ENCODE measurements at regions of chr4 and their contacts with region 1.

Region 1: DNA sequence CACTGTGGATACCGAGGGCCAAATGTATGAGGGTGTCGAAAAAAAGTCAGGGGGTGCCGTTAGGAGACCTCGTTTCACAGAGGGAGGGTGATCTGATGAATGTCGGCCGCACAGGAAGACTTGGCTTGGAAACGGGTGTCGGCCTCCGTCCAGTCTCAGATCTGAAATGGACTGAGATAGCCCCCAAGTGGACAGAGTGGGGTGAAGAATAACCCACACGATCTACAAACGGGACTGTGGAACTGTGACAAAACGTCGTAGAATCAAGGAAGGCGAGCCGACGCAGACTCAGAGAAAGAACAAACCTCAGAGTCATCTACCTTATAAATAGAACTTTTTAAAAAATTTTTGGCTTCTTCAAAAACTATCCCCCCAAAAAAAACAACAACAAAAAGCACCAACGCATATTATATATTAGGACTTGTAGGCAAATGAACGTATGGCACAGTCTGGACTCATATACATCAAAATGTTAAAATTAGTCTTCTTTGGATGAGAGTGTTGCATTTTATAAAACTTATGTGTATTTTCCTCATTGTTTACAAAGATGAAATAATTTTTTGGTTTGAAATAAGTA is 63.8 kb upstream of the IRF2 start:
- DNase-seq: peak in 8 of 9 donors; percentile 42 to 67 (median 56)
- ATAC-seq: peak; percentile 79
- H3K4me3 ChIP-seq: peak overlapping the region; percentile 86
- H3K4me3 Mint-ChIP-seq: peak overlapping the region; percentile 83 to 99 (median 95)
- H3K27ac ChIP-seq: peak overlapping the region; percentile 97
- H3K27ac Mint-ChIP-seq: peak overlapping the region; percentile 90 to 100 (median 99)
- H3K4me1 ChIP-seq: peaks cover 20 to 22% of the 10 kb centered on the region in 2 donors
- H3K4me1 Mint-ChIP-seq: peaks cover 34 to 51% (median 45%) of the 10 kb centered on the region in 7 donors
- H3K27me3 ChIP-seq: no peaks in the 10 kb centered on the region
- H3K27me3 Mint-ChIP-seq: no peaks in the 10 kb centered on the region

Region 2: GRCh38 chr4:182917182-182918043 is 1620.7 kb before region 1 on chr4 and contains the start of gene DCTD:
- CTCF ChIA-PET with region 1: no interaction called
- POLR2A ChIA-PET with region 1: no interaction called
- intact Hi-C with region 1: loop called in 1 of 2 experiments (anchors 5 kb)
- DNase-seq: peak; percentile 71 to 90 (median 80)
- ATAC-seq: peak; percentile 89
- H3K4me3 ChIP-seq: peak within 1 kb of the TSS; percentile 77
- H3K4me3 Mint-ChIP-seq: peak within 1 kb of the TSS; percentile 75 to 95 (median 90)
- H3K27ac ChIP-seq: peak within 1 kb of the TSS; percentile 89
- H3K27ac Mint-ChIP-seq: peak within 1 kb of the TSS; percentile 86 to 98 (median 92)
- H3K4me1 ChIP-seq: peaks cover 20 to 26% of the 10 kb centered on the region in 2 donors
- H3K4me1 Mint-ChIP-seq: peaks cover 17 to 58% (median 50%) of the 10 kb centered on the region in 7 donors
- H3K27me3 ChIP-seq: no peaks in the 10 kb centered on the region
- H3K27me3 Mint-ChIP-seq: peaks cover 0 to 6% (median 0%) of the 10 kb centered on the region in 5 donors
- total RNA-seq, gene DCTD: 61.4 to 76.2 (median 68.9) TPM

Region 3: DNA sequence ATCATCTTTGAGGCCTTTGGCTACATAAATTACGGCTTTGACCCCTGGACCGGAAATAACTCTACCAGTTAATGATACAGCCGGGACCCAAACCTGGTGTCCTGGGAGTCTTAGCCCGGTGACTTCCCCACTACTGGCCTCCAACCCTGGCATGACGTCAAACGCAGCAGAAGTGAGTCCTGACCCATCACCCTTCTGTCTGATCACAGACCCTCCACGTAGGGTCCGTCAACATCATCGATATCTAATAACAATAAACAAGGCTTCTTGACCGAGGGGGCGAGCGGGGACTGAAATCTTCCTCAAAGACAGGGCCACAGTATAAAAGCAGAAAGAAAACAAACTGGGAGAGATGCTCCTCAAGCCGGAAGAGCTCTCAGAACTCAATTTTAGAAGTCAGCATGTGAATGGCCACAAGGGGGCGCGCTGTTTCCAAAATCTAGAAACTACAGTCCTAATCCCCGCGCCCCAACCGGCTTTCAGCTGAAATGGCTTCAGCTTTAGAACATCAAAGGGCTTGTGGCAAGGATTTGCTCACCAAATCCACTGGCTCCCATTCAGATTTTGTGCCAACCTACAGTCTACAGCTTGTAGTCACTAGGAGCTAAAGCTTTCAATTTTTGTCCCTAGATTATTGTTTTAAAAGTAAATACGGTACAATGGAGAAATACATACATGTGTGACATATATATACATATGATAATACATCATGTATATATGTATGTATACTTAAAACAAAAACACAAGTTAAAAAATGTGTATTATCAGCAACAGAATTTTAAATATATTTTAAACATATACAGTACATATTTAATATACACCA is 274.0 kb before region 1 on chr4:
- CTCF ChIA-PET with region 1: interaction called, 10 read pairs
- POLR2A ChIA-PET with region 1: interaction called, 63 read pairs
- intact Hi-C with region 1: loop called (anchors 1 kb)
- DNase-seq: peak; percentile 80 to 90 (median 87)
- ATAC-seq: peak; percentile 86
- H3K4me3 ChIP-seq: no peak overlapping the region
- H3K4me3 Mint-ChIP-seq: peak overlapping the region in 1 of 10 donors; percentile 17
- H3K27ac ChIP-seq: no peak overlapping the region
- H3K27ac Mint-ChIP-seq: peak overlapping the region in 6 of 9 donors; percentile 5 to 72 (median 63)
- H3K4me1 ChIP-seq: peaks cover 6 to 14% of the 10 kb centered on the region in 2 donors
- H3K4me1 Mint-ChIP-seq: peaks cover 5 to 54% (median 28%) of the 10 kb centered on the region in 7 donors
- H3K27me3 ChIP-seq: no peaks in the 10 kb centered on the region
- H3K27me3 Mint-ChIP-seq: peaks cover 0 to 2% (median 0%) of the 10 kb centered on the region in 5 donors

Region 4: DNA sequence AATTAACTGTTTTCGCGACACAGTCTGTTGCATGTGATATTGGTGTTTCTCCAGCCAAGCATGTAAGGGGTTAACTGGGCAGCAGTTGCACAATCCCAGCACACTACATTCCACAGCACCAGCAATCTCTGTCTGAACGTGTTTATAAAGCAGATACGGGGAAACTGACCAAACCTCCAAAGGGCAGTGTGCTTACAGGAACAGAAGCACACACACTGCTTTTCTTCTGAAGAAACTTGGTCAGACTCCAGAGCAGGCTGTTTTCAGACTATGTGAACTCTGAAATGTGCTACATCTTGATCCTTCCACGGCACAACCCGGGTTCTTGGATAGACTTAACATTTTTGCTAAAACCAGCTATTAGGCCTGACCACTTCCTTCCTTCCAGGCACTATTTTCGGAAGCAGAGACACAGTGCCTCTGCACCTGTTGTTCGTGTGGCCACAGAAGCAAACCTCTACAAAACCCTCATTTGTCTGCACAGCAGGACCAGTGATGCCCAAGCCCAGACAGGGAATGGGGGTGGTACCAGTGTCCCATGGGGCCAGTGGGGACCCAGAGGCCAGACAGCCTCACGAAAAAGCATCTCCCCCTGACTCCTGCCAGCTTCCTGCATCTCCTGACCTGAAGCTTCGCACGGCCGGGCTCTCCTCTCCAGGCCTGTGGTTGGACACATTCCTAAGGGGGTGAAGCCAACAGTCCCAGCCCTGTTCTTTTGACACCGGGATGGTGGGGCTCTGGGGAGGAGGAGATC is 153.9 kb before region 1 on chr4:
- CTCF ChIA-PET with region 1: no interaction called
- POLR2A ChIA-PET with region 1: interaction called, 4 read pairs
- intact Hi-C with region 1: loop called in 1 of 2 experiments (anchors 10 kb)
- DNase-seq: peak in 1 of 9 donors; percentile 3
- ATAC-seq: peak; percentile 26
- H3K4me3 ChIP-seq: no peak overlapping the region
- H3K4me3 Mint-ChIP-seq: peak overlapping the region in 9 of 10 donors; percentile 8 to 68 (median 29)
- H3K27ac ChIP-seq: no peak overlapping the region
- H3K27ac Mint-ChIP-seq: peak overlapping the region in 8 of 9 donors; percentile 3 to 86 (median 60)
- H3K4me1 ChIP-seq: peaks cover 24 to 40% of the 10 kb centered on the region in 2 donors
- H3K4me1 Mint-ChIP-seq: peaks cover 41 to 73% (median 63%) of the 10 kb centered on the region in 7 donors
- H3K27me3 ChIP-seq: no peaks in the 10 kb centered on the region
- H3K27me3 Mint-ChIP-seq: no peaks in the 10 kb centered on the region

Region 5: GRCh38 chr4:184514121-184514988 is 23.8 kb before region 1 on chr4:
- CTCF ChIA-PET with region 1: interaction called, 3 read pairs
- POLR2A ChIA-PET with region 1: interaction called, 7 read pairs
- intact Hi-C with region 1: loop called in 1 of 2 experiments (anchors 1 kb)
- DNase-seq: peak in 1 of 9 donors; percentile 68
- ATAC-seq: peak; percentile 83
- H3K4me3 ChIP-seq: no peak overlapping the region
- H3K4me3 Mint-ChIP-seq: peak overlapping the region in 5 of 10 donors; percentile 2 to 70 (median 18)
- H3K27ac ChIP-seq: no peak overlapping the region
- H3K27ac Mint-ChIP-seq: peak overlapping the region in 2 of 9 donors; percentile 79 to 84
- H3K4me1 ChIP-seq: no peaks in the 10 kb centered on the region
- H3K4me1 Mint-ChIP-seq: peaks cover 6 to 32% (median 14%) of the 10 kb centered on the region in 7 donors
- H3K27me3 ChIP-seq: no peaks in the 10 kb centered on the region
- H3K27me3 Mint-ChIP-seq: no peaks in the 10 kb centered on the region

Region 6: GRCh38 chr4:184968784-184969201 is 430.7 kb after region 1 on chr4:
- CTCF ChIA-PET with region 1: no interaction called
- POLR2A ChIA-PET with region 1: no interaction called
- intact Hi-C with region 1: loop called in 1 of 2 experiments (anchors 10 kb)
- DNase-seq: peak in 1 of 9 donors; percentile 16
- ATAC-seq: peak; percentile 17
- H3K4me3 ChIP-seq: no peak overlapping the region
- H3K4me3 Mint-ChIP-seq: peak overlapping the region in 1 of 10 donors; percentile 14
- H3K27ac ChIP-seq: no peak overlapping the region
- H3K27ac Mint-ChIP-seq: peak overlapping the region in 3 of 9 donors; percentile 5 to 90 (median 77)
- H3K4me1 ChIP-seq: no peaks in the 10 kb centered on the region
- H3K4me1 Mint-ChIP-seq: peaks cover 0 to 10% (median 4%) of the 10 kb centered on the region in 7 donors
- H3K27me3 ChIP-seq: no peaks in the 10 kb centered on the region
- H3K27me3 Mint-ChIP-seq: peaks cover 9 to 22% (median 16%) of the 10 kb centered on the region in 5 donors

Region 7: GRCh38 chr4:185282968-185283367 is 744.9 kb after region 1 on chr4:
- CTCF ChIA-PET with region 1: no interaction called
- POLR2A ChIA-PET with region 1: no interaction called
- intact Hi-C with region 1: no loop called
- DNase-seq: no peak
- ATAC-seq: no peak
- H3K4me3 ChIP-seq: no peak overlapping the region
- H3K4me3 Mint-ChIP-seq: no peak overlapping the region
- H3K27ac ChIP-seq: no peak overlapping the region
- H3K27ac Mint-ChIP-seq: no peak overlapping the region
- H3K4me1 ChIP-seq: no peaks in the 10 kb centered on the region
- H3K4me1 Mint-ChIP-seq: peaks cover 0 to 17% (median 4%) of the 10 kb centered on the region in 7 donors
- H3K27me3 ChIP-seq: no peaks in the 10 kb centered on the region
- H3K27me3 Mint-ChIP-seq: no peaks in the 10 kb centered on the region

Region 8: DNA sequence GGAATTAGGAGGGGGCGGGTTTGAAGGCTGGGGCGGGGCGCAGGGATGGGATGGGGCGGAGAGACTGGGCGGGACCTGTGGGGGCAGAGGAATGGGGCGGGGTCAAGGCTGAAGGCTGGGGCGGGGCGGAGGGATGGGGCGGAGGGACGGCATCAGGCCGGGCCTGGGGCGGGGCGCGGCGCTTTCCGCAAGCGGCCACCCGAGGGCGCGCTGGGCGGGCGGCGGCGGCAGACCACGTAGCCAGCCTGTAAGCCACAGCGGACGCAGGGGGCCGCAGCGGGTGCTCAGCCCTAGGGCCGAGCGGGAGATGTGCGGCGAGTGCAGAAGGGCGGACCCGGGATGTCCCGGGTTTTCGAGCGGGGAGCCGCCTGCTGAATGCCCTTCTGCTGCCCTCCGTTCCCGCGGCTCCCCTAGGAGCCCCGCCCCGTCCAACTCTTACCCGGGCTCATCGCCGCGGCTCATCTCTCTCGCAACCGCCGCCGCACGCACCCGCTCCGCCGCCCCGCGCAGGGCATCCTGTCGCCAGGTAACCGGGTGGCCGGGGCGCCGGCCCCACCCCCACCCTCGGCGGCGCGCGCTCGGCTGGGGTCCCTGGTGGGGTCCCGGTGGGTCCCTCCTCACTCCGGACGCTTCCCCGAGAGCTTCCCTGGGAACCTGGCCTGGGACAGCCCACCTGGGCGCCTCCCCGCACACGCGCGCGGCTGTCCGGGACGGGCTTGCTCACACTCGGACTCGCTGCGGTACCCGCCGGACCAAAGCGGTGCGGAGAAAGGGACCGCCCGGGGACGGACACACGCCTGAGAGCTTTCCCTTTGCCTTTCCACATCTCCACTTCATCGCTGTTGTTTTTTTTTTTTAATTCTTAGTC is 933.4 kb after region 1 on chr4 and contains the start of gene CCDC110:
- CTCF ChIA-PET with region 1: no interaction called
- POLR2A ChIA-PET with region 1: no interaction called
- intact Hi-C with region 1: loop called in 1 of 2 experiments (anchors 2 kb)
- DNase-seq: peak; percentile 72 to 89 (median 86)
- ATAC-seq: peak; percentile 99
- H3K4me3 ChIP-seq: peak within 1 kb of the TSS; percentile 61
- H3K4me3 Mint-ChIP-seq: peak within 1 kb of the TSS; percentile 87 to 98 (median 92)
- H3K27ac ChIP-seq: peak within 1 kb of the TSS; percentile 65
- H3K27ac Mint-ChIP-seq: peak within 1 kb of the TSS; percentile 5 to 90 (median 86)
- H3K4me1 ChIP-seq: peaks cover 0 to 3% of the 10 kb centered on the region in 2 donors
- H3K4me1 Mint-ChIP-seq: peaks cover 5 to 18% (median 9%) of the 10 kb centered on the region in 7 donors
- H3K27me3 ChIP-seq: no peaks in the 10 kb centered on the region
- H3K27me3 Mint-ChIP-seq: peaks cover 0 to 52% (median 6%) of the 10 kb centered on the region in 5 donors
- total RNA-seq, gene CCDC110: 0.42 to 1.8 (median 0.76) TPM in 4 of 5 experiments, not detected in the other